CD4-positive, alpha-beta memory T cell (primary cell): ENCODE measurements at regions of chr16 and their contacts with region 1.

Region 1: GRCh38 chr16:66977341-66978113 is 10.9 kb upstream of the CES4A start:
- DNase-seq: peak; percentile 80 to 83 (median 81)
- H3K4me3 ChIP-seq: no peak overlapping the region
- H3K4me3 Mint-ChIP-seq: peak overlapping the region in 1 of 8 donors; percentile 46
- H3K27ac ChIP-seq: no peak overlapping the region
- H3K27ac Mint-ChIP-seq: peak overlapping the region in 2 of 7 donors; percentile 2 to 42
- H3K4me1 ChIP-seq: peaks cover 14% of the 10 kb centered on the region
- H3K4me1 Mint-ChIP-seq: peaks cover 11 to 23% (median 17%) of the 10 kb centered on the region in 4 donors
- H3K27me3 ChIP-seq: no peaks in the 10 kb centered on the region
- H3K27me3 Mint-ChIP-seq: peaks cover 0 to 3% of the 10 kb centered on the region in 2 donors

Region 2: GRCh38 chr16:66934153-66934838 is 43.2 kb before region 1 on chr16 and contains the start of gene CIAO2B:
- CTCF ChIA-PET with region 1: no interaction called
- POLR2A ChIA-PET with region 1: no interaction called
- intact Hi-C with region 1: no loop called
- DNase-seq: peak; percentile 88 to 93 (median 90)
- H3K4me3 ChIP-seq: peak within 1 kb of the TSS; percentile 88 to 98
- H3K4me3 Mint-ChIP-seq: peak within 1 kb of the TSS; percentile 93 to 100 (median 99)
- H3K27ac ChIP-seq: peak within 1 kb of the TSS; percentile 97
- H3K27ac Mint-ChIP-seq: peak within 1 kb of the TSS; percentile 97 to 99 (median 99)
- H3K4me1 ChIP-seq: peaks cover 49% of the 10 kb centered on the region
- H3K4me1 Mint-ChIP-seq: peaks cover 31 to 72% (median 51%) of the 10 kb centered on the region in 4 donors
- H3K27me3 ChIP-seq: no peaks in the 10 kb centered on the region
- H3K27me3 Mint-ChIP-seq: no peaks in the 10 kb centered on the region
- total RNA-seq, gene CIAO2B: 72.7 to 75.0 TPM

Region 3: GRCh38 chr16:66954097-66954659 is 23.3 kb before region 1 on chr16:
- CTCF ChIA-PET with region 1: interaction called, 7 read pairs
- POLR2A ChIA-PET with region 1: interaction called, 3 read pairs
- intact Hi-C with region 1: loop called (anchors 2 kb)
- DNase-seq: peak; percentile 63 to 73 (median 69)
- H3K4me3 ChIP-seq: no peak overlapping the region
- H3K4me3 Mint-ChIP-seq: no peak overlapping the region
- H3K27ac ChIP-seq: no peak overlapping the region
- H3K27ac Mint-ChIP-seq: peak overlapping the region in 1 of 7 donors; percentile 12
- H3K4me1 ChIP-seq: no peaks in the 10 kb centered on the region
- H3K4me1 Mint-ChIP-seq: peaks cover 2 to 7% (median 3%) of the 10 kb centered on the region in 4 donors
- H3K27me3 ChIP-seq: peaks cover 8% of the 10 kb centered on the region
- H3K27me3 Mint-ChIP-seq: peaks cover 25 to 33% of the 10 kb centered on the region in 2 donors

Region 4: DNA sequence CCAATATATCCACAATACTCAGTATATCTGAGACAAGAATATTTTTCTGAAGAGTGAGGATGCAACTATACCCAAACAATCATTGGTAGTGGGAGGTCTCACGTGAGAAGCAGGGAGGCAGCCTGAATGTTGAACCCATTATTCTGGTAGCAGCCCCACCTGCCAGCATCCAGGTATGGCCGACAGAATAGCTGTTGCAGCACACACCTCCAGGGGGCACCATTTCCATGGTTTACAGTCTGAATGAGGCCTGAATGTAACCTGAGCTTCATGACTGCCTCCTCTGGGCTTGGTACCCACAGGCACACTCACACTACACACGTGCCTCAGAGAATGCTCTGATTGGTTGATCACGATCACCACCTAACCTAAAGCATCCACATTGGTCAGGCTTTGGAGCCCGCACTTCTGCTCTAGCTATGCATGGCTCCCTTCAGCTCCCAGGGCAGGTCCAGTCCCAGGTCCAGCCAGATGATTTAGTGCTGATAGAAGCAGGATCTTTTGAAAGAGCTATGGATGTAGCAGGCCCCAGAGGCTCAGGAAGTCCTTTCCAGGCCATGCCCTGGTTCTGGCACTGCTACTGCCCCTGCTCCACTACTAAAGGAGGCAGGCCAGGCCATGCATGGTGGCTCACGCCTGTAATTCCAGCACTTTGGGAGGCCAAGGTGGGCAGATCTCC is 40.4 kb after region 1 on chr16:
- CTCF ChIA-PET with region 1: interaction called, 6 read pairs
- POLR2A ChIA-PET with region 1: no interaction called
- intact Hi-C with region 1: loop called (anchors 5 kb)
- DNase-seq: peak; percentile 82 to 88 (median 86)
- H3K4me3 ChIP-seq: no peak overlapping the region
- H3K4me3 Mint-ChIP-seq: peak overlapping the region in 2 of 8 donors; percentile 3 to 21
- H3K27ac ChIP-seq: no peak overlapping the region
- H3K27ac Mint-ChIP-seq: peak overlapping the region in 4 of 7 donors; percentile 24 to 77 (median 56)
- H3K4me1 ChIP-seq: peaks cover 13% of the 10 kb centered on the region
- H3K4me1 Mint-ChIP-seq: peaks cover 2 to 19% (median 8%) of the 10 kb centered on the region in 4 donors
- H3K27me3 ChIP-seq: no peaks in the 10 kb centered on the region
- H3K27me3 Mint-ChIP-seq: no peaks in the 10 kb centered on the region

Region 5: DNA sequence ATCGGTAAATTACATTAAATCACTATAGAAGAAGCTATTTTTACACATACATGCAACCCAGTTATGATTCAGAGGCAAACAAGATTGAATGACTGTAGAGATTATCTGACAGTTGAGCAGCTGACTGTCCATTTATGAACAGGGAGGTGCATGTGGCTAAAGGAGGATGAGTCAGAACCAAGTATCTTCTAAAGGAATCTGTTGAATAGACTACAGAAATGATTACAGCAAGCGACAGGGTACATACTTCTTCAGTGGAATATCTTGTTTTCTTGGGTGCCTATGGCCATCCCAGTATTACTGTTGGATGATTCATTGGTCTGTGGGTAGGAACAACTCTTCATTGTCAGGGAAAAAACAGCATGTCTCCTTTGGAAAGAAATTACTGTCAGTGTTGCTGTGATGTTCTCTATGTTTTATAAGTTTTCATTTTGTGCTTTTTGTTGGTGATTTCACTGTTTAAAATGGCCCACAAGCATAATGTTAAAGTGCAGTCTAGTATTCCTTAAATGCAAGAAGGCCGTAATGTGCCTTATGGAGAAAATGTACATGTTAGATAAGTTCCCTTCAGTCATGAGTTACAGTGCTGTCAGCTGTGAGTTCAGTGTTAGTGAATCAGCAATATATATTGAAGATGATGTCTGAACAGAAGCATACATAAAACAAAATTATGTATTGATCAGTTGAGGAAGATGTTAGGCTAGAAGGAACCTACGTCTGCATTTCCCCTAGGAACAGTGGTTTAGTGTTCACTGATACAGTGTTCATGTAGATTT is 78.4 kb after region 1 on chr16:
- CTCF ChIA-PET with region 1: no interaction called
- POLR2A ChIA-PET with region 1: no interaction called
- intact Hi-C with region 1: no loop called
- DNase-seq: no peak
- H3K4me3 ChIP-seq: no peak overlapping the region
- H3K4me3 Mint-ChIP-seq: peak overlapping the region in 4 of 8 donors; percentile 17 to 63 (median 27)
- H3K27ac ChIP-seq: no peak overlapping the region
- H3K27ac Mint-ChIP-seq: peak overlapping the region; percentile 4 to 89 (median 72)
- H3K4me1 ChIP-seq: peaks cover 50% of the 10 kb centered on the region
- H3K4me1 Mint-ChIP-seq: peaks cover 41 to 61% (median 50%) of the 10 kb centered on the region in 4 donors
- H3K27me3 ChIP-seq: no peaks in the 10 kb centered on the region
- H3K27me3 Mint-ChIP-seq: no peaks in the 10 kb centered on the region

Region 6: DNA sequence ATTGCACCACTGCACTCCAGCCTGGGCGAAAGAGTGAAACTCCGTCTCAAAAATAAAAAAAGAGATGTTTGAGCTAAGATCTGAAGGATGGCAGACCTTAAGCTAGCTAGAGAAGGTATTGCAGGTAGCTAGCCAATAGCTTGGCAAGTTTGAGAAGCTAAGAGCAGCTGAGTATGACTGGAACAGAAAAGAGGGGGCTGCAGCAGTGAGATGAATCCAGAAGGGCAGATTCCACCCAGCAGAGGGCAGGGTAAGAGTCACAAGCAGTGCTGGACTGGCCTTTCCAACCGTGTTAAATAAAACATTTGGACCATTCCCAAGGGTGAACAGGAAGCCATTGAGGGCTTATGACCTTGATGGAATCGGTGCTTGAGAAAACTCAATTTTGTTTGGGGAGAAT is 126.5 kb after region 1 on chr16:
- CTCF ChIA-PET with region 1: interaction called, 46 read pairs
- POLR2A ChIA-PET with region 1: interaction called, 3 read pairs
- intact Hi-C with region 1: loop called (anchors 1 kb)
- DNase-seq: no peak
- H3K4me3 ChIP-seq: no peak overlapping the region
- H3K4me3 Mint-ChIP-seq: no peak overlapping the region
- H3K27ac ChIP-seq: no peak overlapping the region
- H3K27ac Mint-ChIP-seq: peak overlapping the region in 3 of 7 donors; percentile 7 to 47 (median 19)
- H3K4me1 ChIP-seq: peaks cover 3% of the 10 kb centered on the region
- H3K4me1 Mint-ChIP-seq: peaks cover 0 to 6% (median 0%) of the 10 kb centered on the region in 4 donors
- H3K27me3 ChIP-seq: no peaks in the 10 kb centered on the region
- H3K27me3 Mint-ChIP-seq: no peaks in the 10 kb centered on the region

Region 7: GRCh38 chr16:67415872-67416793 is 438.6 kb after region 1 on chr16 and contains the start of gene ZDHHC1:
- CTCF ChIA-PET with region 1: interaction called, 3 read pairs
- POLR2A ChIA-PET with region 1: no interaction called
- intact Hi-C with region 1: loop called (anchors 1 kb)
- DNase-seq: peak in 4 of 5 donors; percentile 28 to 42 (median 34)
- H3K4me3 ChIP-seq: peak within 1 kb of the TSS in 1 of 2 donors; percentile 27
- H3K4me3 Mint-ChIP-seq: peak within 1 kb of the TSS; percentile 55 to 88 (median 76)
- H3K27ac ChIP-seq: peak within 1 kb of the TSS; percentile 26
- H3K27ac Mint-ChIP-seq: peak within 1 kb of the TSS in 4 of 7 donors; percentile 30 to 83 (median 75)
- H3K4me1 ChIP-seq: peaks cover 9% of the 10 kb centered on the region
- H3K4me1 Mint-ChIP-seq: peaks cover 5 to 16% (median 9%) of the 10 kb centered on the region in 4 donors
- H3K27me3 ChIP-seq: peaks cover 11% of the 10 kb centered on the region
- H3K27me3 Mint-ChIP-seq: peaks cover 19 to 38% of the 10 kb centered on the region in 2 donors
- total RNA-seq, gene ZDHHC1: not detected

Region 8: GRCh38 chr16:67464565-67464964 is 487.0 kb after region 1 on chr16:
- CTCF ChIA-PET with region 1: interaction called, 3 read pairs
- POLR2A ChIA-PET with region 1: no interaction called
- intact Hi-C with region 1: loop called (anchors 2 kb)
- DNase-seq: peak in 1 of 5 donors; percentile 11
- H3K4me3 ChIP-seq: no peak overlapping the region
- H3K4me3 Mint-ChIP-seq: no peak overlapping the region
- H3K27ac ChIP-seq: no peak overlapping the region
- H3K27ac Mint-ChIP-seq: peak overlapping the region in 1 of 7 donors; percentile 48
- H3K4me1 ChIP-seq: peaks cover 13% of the 10 kb centered on the region
- H3K4me1 Mint-ChIP-seq: peaks cover 16 to 53% (median 24%) of the 10 kb centered on the region in 4 donors
- H3K27me3 ChIP-seq: no peaks in the 10 kb centered on the region
- H3K27me3 Mint-ChIP-seq: no peaks in the 10 kb centered on the region